ENCODE measurements at regions of chr16 and their contacts with region 1.

Region 1: DNA sequence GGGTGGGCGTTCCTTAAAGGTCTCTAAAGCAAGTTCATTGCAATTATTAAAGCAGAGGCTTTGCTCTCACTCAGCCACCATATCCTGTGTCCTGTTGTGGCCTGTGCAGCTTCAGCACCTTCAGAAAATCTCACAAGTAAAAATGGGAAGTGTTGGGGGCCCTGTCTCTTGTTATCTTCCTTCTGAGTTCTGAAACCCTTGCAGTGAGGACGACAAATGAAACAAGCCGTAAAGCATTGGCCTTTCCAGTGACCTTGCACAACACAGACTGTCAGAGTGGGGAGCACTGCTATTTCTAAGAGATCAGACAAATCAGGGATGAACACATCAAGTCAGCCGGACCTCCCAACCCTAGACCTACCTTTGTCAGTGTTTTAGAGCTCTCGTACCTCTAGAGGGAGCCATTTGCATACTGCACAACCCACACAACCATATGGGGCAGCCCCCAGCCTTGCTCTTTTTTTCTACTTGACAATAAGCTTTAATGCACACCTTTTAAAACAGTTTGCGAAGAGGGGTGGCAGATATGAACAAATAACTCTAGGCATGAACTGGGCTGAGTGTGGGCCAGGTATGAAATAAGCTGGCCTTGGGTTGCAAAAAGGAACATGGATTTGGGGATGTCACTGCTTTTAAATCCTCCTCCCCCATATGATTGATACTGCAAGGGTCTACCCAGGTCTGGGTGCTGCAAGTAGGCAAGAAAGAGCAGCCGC is 89.8 kb downstream of the KATNIP start:
- DNase-seq: peak; percentile 70 to 79 (median 74)
- ATAC-seq: peak; percentile 96
- H3K4me3 ChIP-seq: no peak overlapping the region
- H3K27ac ChIP-seq: no peak overlapping the region
- H3K4me1 ChIP-seq: peaks cover 0 to 7% of the 10 kb centered on the region in 2 experiments; a peak in 2 of 5 replicates
- H3K27me3 ChIP-seq: no peaks in the 10 kb centered on the region
- CTCF ChIP-seq: peak; percentile 69 to 77 (median 74)
- EP300 ChIP-seq: no peak
- POLR2A ChIP-seq: no peak
- RAD21 ChIP-seq: peak; percentile 29 to 62

Region 2: DNA sequence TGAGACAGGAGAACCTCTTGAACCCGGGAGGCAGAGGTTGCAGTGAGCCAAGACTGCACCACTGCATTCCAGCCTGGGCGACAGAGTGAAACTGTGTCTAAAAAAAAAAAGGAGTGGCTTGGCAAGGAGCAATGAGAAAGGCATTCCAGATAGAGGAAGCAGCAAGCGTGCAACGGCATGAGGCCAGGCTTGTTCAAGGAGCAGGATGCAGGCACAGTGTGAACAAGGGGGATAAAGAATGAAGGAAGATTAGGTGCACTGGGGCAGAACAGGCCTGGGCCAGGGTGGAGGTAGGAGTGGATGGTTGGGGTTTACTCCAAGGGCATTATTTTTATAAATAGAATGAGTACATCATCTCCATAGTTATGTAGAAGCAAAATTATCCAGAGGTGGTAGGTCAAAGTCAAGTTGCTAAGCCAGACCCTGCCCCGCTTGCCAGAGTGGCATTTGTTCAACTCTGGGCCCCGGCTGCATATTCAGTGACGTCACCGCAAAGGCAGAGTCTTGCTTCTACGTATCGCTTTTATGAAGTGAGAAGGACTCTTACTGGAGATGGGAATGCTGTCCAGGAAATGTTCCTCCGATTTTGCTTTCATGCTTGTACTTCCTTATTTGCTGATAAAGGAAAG is 10.5 kb after region 1 on chr16:
- CTCF ChIA-PET with region 1: no interaction called
- POLR2A ChIA-PET with region 1: no interaction called
- in situ Hi-C with region 1: no loop called
- intact Hi-C with region 1: no loop called
- DNase-seq: no peak
- ATAC-seq: no peak
- H3K4me3 ChIP-seq: no peak overlapping the region
- H3K27ac ChIP-seq: no peak overlapping the region
- H3K4me1 ChIP-seq: no peaks in the 10 kb centered on the region
- H3K27me3 ChIP-seq: no peaks in the 10 kb centered on the region
- CTCF ChIP-seq: no peak
- EP300 ChIP-seq: no peak
- POLR2A ChIP-seq: no peak
- RAD21 ChIP-seq: no peak

Region 3: GRCh38 chr16:27972500-27972899 is 332.8 kb after region 1 on chr16:
- CTCF ChIA-PET with region 1: no interaction called
- POLR2A ChIA-PET with region 1: no interaction called
- in situ Hi-C with region 1: no loop called
- intact Hi-C with region 1: loop called (anchors 10 kb)
- DNase-seq: peak; percentile 40 to 48 (median 44)
- ATAC-seq: peak; percentile 74
- H3K4me3 ChIP-seq: no peak overlapping the region
- H3K27ac ChIP-seq: no peak overlapping the region
- H3K4me1 ChIP-seq: no peaks in the 10 kb centered on the region
- H3K27me3 ChIP-seq: peaks cover 0 to 7% of the 10 kb centered on the region in 2 experiments; a peak in 2 of 5 replicates
- CTCF ChIP-seq: peak; percentile 57 to 64 (median 61)
- EP300 ChIP-seq: no peak
- POLR2A ChIP-seq: no peak
- RAD21 ChIP-seq: peak; percentile 51 to 77

Measured in K562 (cell line).